Posterior vena cava (tissue), 2 donors: ENCODE measurements at regions of chr2 and their contacts with region 1.

Region 1: GRCh38 chr2:28893476-28893875 is 991 bp upstream of the WDR43 start:
- DNase-seq: no peak

Region 2: GRCh38 chr2:28870146-28870891 is 23.2 kb before region 1 on chr2 and contains the start of gene TRMT61B:
- intact Hi-C with region 1: loop called in 1 of 2 experiments (anchors 2 kb)
- DNase-seq: peak; percentile 99
- total RNA-seq, gene TRMT61B: 16.0 to 17.1 TPM